ENCODE measurements at regions of chr1 and their contacts with region 1.

Region 1: DNA sequence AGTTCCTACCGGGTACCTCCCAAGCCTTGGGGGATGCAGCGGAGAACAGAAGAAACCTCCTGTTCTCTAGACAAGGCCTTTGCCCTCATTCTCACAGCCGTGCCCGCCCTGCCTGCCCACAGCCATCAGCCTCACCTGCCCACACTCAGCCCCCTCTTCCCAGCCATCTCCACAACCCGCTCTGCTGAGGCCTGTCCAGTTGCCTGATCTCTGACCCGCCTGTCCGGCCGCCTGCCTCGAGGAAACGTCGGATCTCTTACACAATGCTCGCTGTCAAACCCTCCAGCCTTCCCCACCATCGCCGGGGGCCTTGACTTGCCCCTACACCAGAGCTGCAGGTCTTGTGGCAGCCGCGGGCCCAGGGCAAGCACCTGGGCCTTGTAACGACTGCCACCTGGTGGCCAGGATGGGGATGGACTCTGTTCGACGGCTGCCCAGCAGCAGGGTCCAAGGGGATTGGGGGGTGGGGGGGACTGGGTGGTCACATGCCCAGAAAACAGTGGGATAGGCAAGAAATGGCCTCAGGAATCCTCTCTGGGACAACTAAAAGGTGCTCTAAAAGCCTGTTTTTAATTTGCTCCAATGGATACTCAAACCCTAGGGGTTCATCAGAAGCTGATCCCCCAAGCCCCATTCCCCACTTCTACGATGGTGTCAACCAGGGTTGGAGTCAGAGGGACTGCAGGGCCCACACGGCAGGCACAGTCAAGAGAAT is 31.0 kb downstream of the SLC45A1 start:
- DNase-seq: peak; percentile 76
- H3K4me3 Mint-ChIP-seq: no peak overlapping the region
- H3K27ac Mint-ChIP-seq: no peak overlapping the region
- H3K4me1 Mint-ChIP-seq: peaks cover 2% of the 10 kb centered on the region
- H3K27me3 Mint-ChIP-seq: peaks cover 2% of the 10 kb centered on the region

Region 2: DNA sequence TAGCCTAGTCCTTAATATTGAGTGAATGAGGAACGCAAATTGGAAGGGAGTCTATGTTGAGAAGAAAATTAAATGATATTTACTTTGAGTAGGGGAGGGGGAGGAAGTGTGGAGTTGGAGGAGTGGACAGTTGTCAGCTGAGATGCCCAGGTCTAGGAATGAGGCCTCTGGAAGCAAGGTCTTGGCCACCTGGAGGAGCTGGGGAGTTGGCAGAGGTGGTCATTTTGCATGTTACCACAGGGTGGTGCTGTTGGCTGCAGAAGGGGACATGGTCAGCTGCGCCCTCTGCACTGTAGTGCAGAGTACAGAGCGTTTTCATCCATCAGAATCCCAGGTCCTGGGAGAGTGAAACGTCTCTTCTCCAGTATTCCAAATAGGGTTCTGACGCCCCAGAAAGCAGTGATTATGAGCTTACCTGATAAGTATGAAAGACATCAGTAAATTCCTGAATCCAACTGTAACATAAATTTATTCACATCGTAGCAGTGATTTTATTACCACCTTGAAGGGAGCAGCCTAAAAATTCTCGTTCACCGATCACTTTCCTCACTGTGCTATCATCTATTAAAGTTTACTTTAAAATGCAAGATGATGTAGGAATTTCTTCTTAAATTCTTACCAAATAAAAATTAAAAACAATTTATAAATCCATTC is 373.6 kb before region 1 on chr1:
- CTCF ChIA-PET with region 1: interaction called, 15 read pairs
- POLR2A ChIA-PET with region 1: no interaction called
- intact Hi-C with region 1: no loop called
- DNase-seq: peak; percentile 58
- H3K4me3 Mint-ChIP-seq: no peak overlapping the region
- H3K27ac Mint-ChIP-seq: no peak overlapping the region
- H3K4me1 Mint-ChIP-seq: peaks cover 2% of the 10 kb centered on the region
- H3K27me3 Mint-ChIP-seq: no peaks in the 10 kb centered on the region

Region 3: GRCh38 chr1:8026153-8026975 is 322.6 kb before region 1 on chr1 and contains the start of gene ERRFI1:
- CTCF ChIA-PET with region 1: interaction called, 34 read pairs
- POLR2A ChIA-PET with region 1: no interaction called
- intact Hi-C with region 1: no loop called
- DNase-seq: peak; percentile 91
- H3K4me3 Mint-ChIP-seq: peak within 1 kb of the TSS; percentile 78
- H3K27ac Mint-ChIP-seq: no peak within 1 kb of the TSS
- H3K4me1 Mint-ChIP-seq: peaks cover 12% of the 10 kb centered on the region
- H3K27me3 Mint-ChIP-seq: peaks cover 21% of the 10 kb centered on the region
- total RNA-seq, gene ERRFI1: 1.5 to 1.9 TPM